ENCODE measurements at regions of chr20 and their contacts with region 1.

Region 1: DNA sequence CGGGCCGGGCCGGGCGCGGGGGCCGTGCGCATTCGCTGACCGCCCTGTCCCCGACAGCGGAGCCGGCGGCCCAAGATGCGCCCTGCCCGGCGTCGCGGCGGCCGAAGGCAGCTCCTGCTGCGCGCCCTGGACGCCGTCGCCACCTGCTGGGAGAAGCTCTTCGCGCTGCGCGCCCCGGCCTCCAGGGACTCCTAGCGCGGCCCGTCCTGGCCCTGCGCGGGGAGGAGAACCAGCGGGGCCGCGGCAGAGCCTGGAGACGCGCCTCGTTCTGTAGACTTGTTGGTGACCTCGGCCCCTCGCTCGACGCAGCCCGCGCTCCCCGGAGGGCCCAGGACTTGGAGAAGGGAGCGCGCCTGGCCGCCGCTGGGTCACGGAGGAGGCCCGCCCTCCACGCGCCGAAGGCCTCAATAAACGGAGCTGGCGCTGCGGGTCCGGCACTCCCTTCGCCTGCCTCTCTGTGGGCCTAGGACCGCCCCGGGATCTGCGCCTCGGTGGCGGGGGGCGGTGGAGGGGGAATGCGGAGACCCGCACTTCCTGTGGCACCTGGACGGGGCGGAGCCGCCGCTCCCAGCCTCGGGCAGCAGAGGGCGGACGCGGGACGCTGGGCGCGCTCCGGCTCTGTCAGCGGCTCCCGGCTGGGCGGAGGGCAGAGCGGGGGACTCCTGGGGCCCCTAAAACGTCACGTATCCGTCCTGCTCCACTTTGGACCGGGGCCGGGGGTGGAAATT is 2.7 kb downstream of the C20orf204 start:
- DNase-seq: peak; percentile 89
- ATAC-seq: peak; percentile 70
- H3K4me3 Mint-ChIP-seq: peak overlapping the region; percentile 61
- H3K27ac Mint-ChIP-seq: no peak overlapping the region
- H3K4me1 Mint-ChIP-seq: peaks cover 48% of the 10 kb centered on the region
- H3K27me3 Mint-ChIP-seq: peaks cover 2% of the 10 kb centered on the region

Region 2: DNA sequence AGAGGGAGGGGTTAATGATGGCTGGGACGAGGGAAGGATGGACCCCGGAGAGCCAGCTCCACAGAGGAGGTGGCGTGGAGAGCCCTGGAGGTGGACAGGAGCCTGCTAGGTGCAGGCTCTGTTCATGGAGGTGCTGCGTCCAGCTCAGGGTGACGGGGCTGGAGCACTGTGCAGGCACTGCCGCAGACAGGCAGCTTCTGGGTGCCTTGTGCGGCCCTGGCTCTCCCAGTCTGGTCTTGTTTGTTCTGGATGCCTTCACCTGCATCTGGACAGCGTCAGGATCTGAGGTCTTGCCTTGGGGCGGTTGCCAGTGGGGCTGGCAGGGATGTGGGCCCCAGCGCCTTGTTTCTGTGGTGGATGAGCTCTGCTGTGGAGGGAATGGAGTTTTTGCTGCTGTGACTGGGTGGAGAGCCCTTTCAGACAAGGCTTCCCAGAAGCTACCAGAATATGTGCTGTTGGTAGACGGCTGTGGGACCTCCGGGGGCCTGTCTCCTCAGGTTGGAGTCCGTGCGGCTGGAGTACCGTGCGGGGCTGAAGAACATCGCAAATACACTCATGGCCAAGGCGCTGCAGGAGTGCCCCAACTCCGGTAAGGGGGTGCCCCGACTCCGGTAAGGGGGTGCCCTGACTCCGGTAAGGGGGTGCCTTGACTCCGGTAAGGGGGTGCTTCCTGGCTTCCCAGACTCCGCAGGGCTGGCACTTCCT is 10.6 kb before region 1 on chr20:
- CTCF ChIA-PET with region 1: interaction called, 10 read pairs
- POLR2A ChIA-PET with region 1: no interaction called
- intact Hi-C with region 1: no loop called
- DNase-seq: no peak
- ATAC-seq: no peak
- H3K4me3 Mint-ChIP-seq: no peak overlapping the region
- H3K27ac Mint-ChIP-seq: no peak overlapping the region
- H3K4me1 Mint-ChIP-seq: no peaks in the 10 kb centered on the region
- H3K27me3 Mint-ChIP-seq: no peaks in the 10 kb centered on the region

Region 3: DNA sequence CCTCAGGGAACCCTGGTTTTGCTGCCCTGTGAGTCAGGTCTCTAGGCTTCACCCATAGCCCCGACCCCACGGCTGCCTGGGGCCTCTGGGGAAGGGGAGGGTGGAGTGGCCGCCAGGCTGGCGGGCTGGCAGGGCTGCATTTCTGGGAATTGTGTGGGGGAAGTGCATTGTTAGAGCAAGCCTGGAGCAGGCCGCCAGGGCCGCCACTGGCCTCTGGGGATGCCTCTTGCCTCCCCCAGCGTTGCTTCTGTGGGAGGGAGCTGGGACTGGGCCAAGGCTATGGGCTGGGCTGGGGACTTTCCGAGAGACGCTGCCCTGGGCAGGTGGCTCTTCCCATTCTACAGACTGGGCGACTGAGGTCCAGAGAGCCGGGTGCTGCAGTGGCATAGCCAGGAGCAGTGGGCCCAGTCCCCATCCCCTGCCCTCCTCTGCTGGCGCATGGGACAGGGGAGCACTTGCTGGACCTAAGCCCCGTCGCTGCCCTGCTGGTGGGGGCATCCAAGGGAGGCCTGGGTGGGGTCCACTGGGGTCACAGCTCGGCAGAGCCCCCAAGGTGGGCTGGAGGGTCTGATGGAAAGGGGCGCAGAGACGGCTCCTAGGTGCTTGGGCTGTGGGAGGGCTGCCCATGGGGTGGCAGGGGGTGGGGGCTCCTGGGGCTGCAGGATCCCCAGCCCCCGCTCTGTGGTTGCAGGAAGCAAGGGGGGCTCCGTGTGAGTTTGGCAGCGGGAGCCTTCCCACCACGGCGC is 17.3 kb after region 1 on chr20:
- CTCF ChIA-PET with region 1: interaction called, 5 read pairs
- POLR2A ChIA-PET with region 1: interaction called, 3 read pairs
- intact Hi-C with region 1: loop called (anchors 1 kb)
- DNase-seq: no peak
- ATAC-seq: no peak
- H3K4me3 Mint-ChIP-seq: no peak overlapping the region
- H3K27ac Mint-ChIP-seq: no peak overlapping the region
- H3K4me1 Mint-ChIP-seq: peaks cover 14% of the 10 kb centered on the region
- H3K27me3 Mint-ChIP-seq: peaks cover 18% of the 10 kb centered on the region

Region 4: DNA sequence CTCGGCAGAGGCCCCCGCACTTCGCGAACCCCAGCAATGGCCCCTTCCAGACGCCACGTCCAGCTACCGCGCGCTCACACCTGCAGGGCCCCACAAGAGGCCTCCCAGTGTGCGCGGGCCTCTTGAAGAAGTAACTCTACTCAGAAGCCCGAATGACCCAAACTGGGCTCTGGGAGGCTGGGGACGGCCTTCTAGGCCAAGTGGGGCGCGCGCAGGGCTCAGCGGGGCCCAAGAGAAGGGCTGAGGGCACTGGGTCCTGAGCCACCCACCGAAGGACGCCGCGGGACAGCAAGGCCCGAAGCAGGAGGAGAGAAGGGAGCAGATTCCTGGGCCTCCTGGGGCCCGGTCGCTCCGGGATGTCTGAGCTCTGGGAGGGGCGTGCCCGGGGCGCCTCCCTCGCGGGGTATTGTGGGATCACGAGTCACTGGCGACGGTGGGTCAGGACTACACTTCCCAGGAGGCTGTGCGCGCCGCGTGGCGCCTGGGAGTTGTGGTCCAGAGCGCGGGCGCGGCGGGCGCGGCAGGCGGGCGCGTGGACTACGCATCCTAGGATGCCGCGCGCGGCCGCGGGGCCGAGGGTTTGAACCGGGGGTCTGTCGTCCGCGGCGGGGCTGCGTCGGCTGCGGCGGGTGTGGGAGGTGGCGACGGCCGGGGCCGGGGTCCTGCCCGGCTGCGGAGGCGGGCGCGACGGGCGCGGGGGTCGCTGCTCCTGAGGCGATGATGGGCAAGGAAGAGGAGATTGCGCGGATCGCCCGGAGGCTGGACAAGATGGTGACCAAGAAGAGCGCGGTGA is 24.1 kb after region 1 on chr20 and contains the start of gene TCEA2:
- CTCF ChIA-PET with region 1: interaction called, 9 read pairs
- POLR2A ChIA-PET with region 1: no interaction called
- intact Hi-C with region 1: loop called in 1 of 2 experiments (anchors 1 kb)
- DNase-seq: peak; percentile 98
- ATAC-seq: peak; percentile 83
- H3K4me3 Mint-ChIP-seq: peak within 1 kb of the TSS; percentile 82
- H3K27ac Mint-ChIP-seq: peak within 1 kb of the TSS; percentile 79
- H3K4me1 Mint-ChIP-seq: peaks cover 51% of the 10 kb centered on the region
- H3K27me3 Mint-ChIP-seq: no peaks in the 10 kb centered on the region
- total RNA-seq, gene TCEA2: 40.6 to 50.0 TPM

Region 5: DNA sequence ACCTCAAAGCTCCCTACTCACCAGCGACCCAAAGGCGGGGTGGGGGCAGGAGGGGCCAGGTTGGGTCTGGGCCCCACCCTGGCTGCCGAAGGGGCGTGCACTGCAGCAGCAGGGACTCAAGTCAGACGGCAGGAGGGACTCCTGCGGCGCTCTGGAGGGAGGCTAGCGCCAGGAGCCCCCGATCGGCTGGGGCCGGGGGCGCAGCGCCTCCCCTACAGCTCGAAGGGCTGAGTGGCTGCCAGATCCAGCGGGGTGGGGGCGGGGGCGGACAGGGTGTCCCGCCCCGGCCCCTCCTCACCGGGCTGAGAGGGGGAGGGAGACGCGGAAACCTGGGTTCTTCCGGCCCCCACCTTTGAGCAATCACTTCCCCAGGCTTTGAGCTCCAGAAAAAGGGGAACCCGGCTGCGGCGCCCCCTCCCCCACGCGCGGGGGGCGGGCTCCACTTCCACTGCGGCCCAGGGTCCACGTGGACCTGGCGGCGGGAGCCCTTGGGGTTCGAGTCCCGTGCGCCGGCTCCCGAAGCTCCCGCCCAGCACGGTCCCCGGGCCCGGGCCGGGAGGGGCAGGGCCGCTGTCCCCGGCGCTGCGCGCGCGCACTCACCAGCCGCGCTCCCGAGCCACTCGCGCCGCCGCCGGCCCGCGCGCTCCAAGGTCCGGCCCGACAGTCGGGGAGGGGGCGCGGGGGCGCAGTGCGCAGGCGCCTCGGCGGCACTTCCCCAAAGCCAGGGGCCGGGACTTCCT is 40.7 kb after region 1 on chr20 and contains the start of gene RGS19:
- CTCF ChIA-PET with region 1: interaction called, 5 read pairs
- POLR2A ChIA-PET with region 1: no interaction called
- intact Hi-C with region 1: loop called in 1 of 2 experiments (anchors 2 kb)
- DNase-seq: peak; percentile 77
- ATAC-seq: peak; percentile 43
- H3K4me3 Mint-ChIP-seq: peak within 1 kb of the TSS; percentile 90
- H3K27ac Mint-ChIP-seq: peak within 1 kb of the TSS; percentile 88
- H3K4me1 Mint-ChIP-seq: peaks cover 28% of the 10 kb centered on the region
- H3K27me3 Mint-ChIP-seq: peaks cover 3% of the 10 kb centered on the region
- total RNA-seq, gene RGS19: 39.6 to 40.2 TPM

Region 6: GRCh38 chr20:64161356-64162238 is 122.9 kb after region 1 on chr20:
- CTCF ChIA-PET with region 1: no interaction called
- POLR2A ChIA-PET with region 1: no interaction called
- intact Hi-C with region 1: no loop called
- DNase-seq: peak; percentile 61
- ATAC-seq: peak; percentile 65
- H3K4me3 Mint-ChIP-seq: no peak overlapping the region
- H3K27ac Mint-ChIP-seq: no peak overlapping the region
- H3K4me1 Mint-ChIP-seq: peaks cover 1% of the 10 kb centered on the region
- H3K27me3 Mint-ChIP-seq: peaks cover 54% of the 10 kb centered on the region

Measured in activated CD4-positive, alpha-beta T cell treated with anti-CD3 and anti-CD28 coated beads for 36 hours (primary cell).